Activated B cell treated with CpG ODN at 0.5 μM for 24 hours (primary cell): ENCODE measurements at regions of chr7 and their contacts with region 1.

Region 1: DNA sequence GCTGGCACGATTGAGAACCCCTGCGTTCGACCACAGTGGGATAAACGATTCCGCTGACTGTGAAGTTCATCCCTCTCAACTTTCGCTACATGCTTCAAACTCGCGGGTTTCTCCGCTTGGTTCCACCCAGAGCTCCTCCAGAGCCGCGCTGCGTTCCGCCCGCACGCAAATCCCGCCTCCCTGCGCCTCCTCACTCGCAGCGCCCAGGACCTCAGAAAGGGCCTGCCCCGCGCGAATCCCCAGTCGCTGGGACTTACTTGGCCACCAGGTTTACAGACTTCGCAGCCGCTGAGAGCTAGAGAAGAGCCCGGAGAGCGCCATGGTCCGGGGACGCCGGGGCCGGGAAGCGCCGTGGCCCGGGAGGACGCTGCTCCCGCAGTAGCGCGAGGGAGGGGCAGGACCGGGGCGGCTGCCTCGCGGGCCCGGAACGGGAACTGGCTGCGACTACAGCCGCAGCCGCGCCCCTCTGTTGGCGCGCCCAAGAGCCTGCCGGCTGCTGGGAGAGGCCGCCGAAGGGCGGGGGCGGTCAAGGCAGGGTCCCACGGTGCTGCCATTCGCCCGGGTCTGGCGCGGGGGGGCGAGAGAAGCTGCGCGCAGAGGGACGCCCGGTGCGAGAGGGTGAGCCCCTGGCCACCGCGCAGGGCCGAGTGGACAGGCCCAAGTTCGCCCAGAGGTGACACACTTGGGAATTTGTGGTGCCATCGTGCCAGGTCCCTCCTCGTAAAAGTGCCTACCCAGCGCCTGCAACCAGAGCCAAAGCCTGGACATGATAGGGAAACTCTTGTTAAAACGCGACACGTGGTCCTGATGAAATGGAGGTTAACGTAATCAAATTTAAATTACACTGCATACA is at the start of gene NOD1:
- DNase-seq: peak; percentile 70
- ATAC-seq: peak; percentile 89
- H3K4me3 Mint-ChIP-seq: peak within 1 kb of the TSS; percentile 95
- H3K27ac Mint-ChIP-seq: peak within 1 kb of the TSS; percentile 87
- H3K4me1 Mint-ChIP-seq: peaks cover 54% of the 10 kb centered on the region
- H3K27me3 Mint-ChIP-seq: no peaks in the 10 kb centered on the region
- CTCF ChIP-seq: no peak
- total RNA-seq, gene NOD1: 11.7 and 14.0 TPM in 2 replicates

Region 2: DNA sequence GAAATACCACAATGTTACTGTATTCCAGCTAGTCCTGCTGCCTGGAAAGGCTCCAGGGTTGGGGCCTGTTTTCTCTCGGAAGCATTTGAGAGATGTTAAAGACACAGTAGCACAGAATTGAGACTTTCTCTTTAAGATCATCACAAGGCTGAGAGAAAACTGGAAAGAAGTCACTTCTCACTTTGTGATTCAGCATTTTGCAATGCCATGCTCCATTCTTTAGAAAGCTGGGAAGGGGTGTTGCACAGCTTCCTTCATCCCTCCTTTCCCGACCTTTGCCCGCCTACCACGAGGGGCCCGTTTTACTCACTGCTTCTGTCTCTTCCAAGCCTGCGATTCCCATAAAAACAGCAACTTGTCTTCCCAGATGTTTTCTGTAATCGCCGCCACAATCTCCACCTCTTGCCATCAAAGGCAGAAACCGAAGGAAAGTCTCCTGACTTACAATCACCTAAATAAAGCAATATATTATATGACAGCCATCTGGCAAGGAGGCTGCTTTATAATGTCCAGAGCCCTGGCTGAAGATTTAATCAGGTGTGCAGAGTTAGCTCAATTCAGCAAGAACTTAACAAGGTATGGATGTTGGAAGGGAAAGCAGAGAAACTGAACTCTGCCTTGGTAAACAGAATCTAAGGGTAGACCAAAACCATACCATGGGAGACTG is 18.9 kb before region 1 on chr7:
- CTCF ChIA-PET with region 1: interaction called, 3 read pairs
- POLR2A ChIA-PET with region 1: interaction called, 10 read pairs
- intact Hi-C with region 1: loop called (anchors 1 kb)
- DNase-seq: no peak
- ATAC-seq: no peak
- H3K4me3 Mint-ChIP-seq: no peak overlapping the region
- H3K27ac Mint-ChIP-seq: no peak overlapping the region
- H3K4me1 Mint-ChIP-seq: peaks cover 35% of the 10 kb centered on the region
- H3K27me3 Mint-ChIP-seq: no peaks in the 10 kb centered on the region
- CTCF ChIP-seq: no peak

Region 3: GRCh38 chr7:31271621-31272405 is 793.2 kb after region 1 on chr7:
- CTCF ChIA-PET with region 1: no interaction called
- POLR2A ChIA-PET with region 1: no interaction called
- intact Hi-C with region 1: no loop called
- DNase-seq: no peak
- ATAC-seq: no peak
- H3K4me3 Mint-ChIP-seq: no peak overlapping the region
- H3K27ac Mint-ChIP-seq: no peak overlapping the region
- H3K4me1 Mint-ChIP-seq: no peaks in the 10 kb centered on the region
- H3K27me3 Mint-ChIP-seq: peaks cover 3% of the 10 kb centered on the region
- CTCF ChIP-seq: no peak